ENCODE measurements at regions of chr11 and their contacts with region 1.

Region 1: DNA sequence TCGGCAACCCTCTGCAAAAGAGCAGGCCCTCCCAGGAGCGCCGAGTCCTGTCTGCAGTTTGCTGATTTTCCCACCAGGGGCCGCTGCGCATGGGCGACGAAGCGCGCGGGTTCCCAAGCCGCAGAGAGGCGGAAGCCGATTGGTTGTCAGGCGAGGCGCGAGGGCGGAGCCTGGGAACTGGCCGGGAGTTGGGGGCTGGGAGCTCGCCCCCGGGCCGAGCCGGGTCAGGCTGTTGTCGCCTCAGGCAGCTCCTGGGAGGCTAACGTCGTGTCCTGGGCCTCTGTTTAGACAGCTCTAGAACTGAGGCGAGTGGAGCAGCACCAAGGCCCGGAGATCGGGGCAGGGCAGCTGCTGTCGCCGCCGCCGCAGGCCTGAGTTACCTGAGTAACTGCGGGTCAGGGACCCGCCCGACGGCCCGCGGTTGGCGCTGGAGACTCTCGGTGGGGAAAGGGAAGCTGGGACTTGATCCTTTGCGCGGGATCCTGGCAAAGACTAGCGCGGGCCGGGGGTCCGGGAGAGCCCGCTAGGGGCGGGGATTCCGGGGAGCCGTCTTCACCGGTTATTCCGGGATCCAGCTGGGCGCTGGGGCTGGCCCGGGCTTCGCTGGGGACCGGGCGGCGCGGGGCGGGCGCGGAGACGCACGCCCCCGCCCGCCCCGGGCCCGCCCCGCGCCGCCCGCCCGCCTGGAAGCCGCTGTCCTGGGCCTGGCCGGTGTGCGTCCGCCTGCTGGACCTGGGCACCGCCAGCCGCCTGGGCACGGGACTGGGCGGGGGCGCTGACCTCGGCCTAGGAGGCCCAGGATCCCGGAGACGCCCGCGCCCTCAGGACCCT is at the start of gene STIM1:
- DNase-seq: peak; percentile 45
- H3K4me3 ChIP-seq: peak within 1 kb of the TSS; percentile 85
- CTCF ChIP-seq: peak; percentile 97

Region 2: DNA sequence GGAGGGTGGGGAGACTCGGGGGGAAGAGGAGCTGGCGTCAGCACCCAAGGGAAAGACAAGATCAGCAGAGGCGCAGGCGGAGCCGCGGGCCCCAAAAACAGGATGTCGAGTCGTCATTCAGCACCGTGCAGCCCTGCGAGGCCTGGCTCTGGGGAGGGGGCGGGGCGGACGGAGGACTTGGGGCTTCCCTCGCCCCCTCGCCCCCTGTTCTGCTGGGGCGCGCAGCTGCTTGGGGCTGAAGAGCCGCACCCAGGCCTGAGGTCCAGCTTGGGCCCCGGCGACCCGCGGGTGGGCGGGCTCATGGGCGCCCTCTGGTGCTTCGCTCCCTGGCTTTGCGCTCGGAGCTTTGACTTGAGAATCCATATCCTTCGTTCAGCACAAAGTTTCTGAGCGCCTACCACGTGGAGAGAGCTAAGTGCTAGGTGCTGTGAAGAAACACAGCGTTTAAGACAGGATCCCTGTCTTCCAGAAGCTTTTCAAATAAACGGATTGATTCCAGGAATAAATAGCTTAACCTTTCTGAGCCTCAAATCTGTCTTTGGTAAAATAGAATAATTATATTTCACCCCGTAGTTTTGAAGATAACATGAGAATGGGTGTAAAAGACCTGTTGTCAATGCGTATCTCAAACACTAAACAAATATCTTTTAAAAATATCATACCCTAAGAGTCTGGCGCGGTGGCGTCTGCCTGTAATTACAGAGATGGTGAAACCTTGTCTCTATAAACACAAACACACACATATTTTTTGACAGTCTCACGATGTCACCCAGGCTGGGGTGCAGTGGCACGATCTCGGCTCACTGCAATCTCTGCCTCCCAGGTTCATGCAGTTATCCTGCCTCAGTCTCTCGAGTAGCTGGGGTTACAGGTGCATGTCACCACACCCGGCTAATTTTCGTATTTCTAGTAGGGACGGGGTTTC is 13.5 kb before region 1 on chr11:
- CTCF ChIA-PET with region 1: interaction called, 332 read pairs
- POLR2A ChIA-PET with region 1: interaction called, 10 read pairs
- DNase-seq: no peak
- H3K4me3 ChIP-seq: peak overlapping the region; percentile 73
- CTCF ChIP-seq: peak; percentile 91

Region 3: DNA sequence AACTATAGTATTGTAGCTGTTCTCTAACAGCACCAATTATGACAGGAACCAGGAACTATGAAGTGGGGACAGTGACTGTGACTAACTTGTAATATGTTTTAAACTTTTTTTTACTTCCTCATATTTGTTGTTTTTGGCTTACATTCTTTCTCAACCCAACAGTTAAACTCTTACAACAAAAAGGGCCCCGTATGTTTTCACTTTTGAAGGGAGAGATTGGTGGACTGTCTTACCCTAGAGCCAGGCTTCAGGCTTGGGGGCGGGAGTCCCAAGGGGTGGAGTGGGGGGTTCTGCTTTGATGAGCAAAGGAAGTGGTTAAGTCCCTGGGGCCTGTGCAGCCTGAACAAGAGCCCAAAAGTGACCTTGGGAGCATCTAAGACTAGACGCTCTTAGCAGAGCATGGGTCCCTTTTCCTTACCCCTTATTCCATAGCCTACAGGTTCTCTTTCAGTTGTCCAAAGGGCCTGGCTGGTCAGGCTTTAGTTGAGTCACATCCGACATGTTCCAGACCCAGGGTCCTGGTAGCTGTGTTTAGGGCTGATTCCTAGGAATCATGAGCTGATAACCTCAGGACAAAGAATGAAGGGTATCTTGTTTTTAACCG is 39.0 kb after region 1 on chr11:
- CTCF ChIA-PET with region 1: interaction called, 20 read pairs
- POLR2A ChIA-PET with region 1: no interaction called
- DNase-seq: no peak
- H3K4me3 ChIP-seq: no peak overlapping the region
- CTCF ChIP-seq: no peak

Region 4: GRCh38 chr11:3959015-3959919 is 104.1 kb after region 1 on chr11:
- CTCF ChIA-PET with region 1: interaction called, 22 read pairs
- POLR2A ChIA-PET with region 1: no interaction called
- DNase-seq: peak; percentile 55
- H3K4me3 ChIP-seq: no peak overlapping the region
- CTCF ChIP-seq: no peak

Region 5: GRCh38 chr11:3984896-3985295 is 129.7 kb after region 1 on chr11:
- CTCF ChIA-PET with region 1: interaction called, 38 read pairs
- POLR2A ChIA-PET with region 1: no interaction called
- DNase-seq: no peak
- H3K4me3 ChIP-seq: no peak overlapping the region
- CTCF ChIP-seq: peak; percentile 32

Measured in AG04449 (cell line).